ENCODE measurements at regions of chr1 and their contacts with region 1.

Region 1: DNA sequence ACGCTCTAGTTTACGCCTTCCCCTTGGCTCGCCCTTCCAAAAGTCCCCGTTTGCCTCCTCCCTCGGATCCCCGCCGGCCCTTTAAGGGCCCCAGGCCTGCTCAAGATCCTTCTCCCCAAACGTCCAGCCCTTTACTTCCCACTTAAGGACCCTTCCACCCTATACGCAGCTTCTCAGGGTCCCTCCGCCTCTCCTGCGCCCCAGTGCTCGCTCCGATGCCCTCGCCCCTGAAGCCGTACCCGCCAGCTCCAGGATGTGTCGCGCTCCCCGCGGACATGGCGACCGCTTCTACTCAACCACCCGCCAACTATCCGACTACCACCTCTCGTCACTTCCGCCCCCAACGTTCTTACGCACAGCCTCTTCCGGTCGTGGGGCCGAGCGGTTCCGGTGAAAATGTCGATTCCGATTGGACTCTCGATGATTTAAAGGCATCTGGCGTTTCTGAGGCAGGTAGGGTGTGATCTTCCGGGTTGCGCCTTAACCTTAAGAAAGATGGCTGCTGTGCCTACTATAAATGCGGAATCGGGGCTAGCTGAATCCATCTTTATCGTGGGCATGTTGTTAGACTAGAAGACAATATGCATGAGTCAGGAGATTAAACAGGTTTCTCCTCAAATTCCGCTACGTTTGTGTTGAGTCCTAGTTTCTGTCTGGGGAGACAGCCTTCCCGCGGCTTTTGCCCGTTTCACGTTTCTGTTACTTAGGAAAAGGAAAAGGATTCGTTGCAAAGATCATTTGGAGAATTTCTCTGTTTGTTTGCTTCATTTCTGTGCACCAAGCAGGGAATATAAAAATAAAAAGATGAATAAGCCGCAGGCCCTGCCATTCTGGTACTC is at the start of gene KHDC4:
- DNase-seq: peak; percentile 97
- total RNA-seq, gene KHDC4: 26.8 TPM

Region 2: GRCh38 chr1:155859881-155860871 is 74.1 kb before region 1 on chr1:
- intact Hi-C with region 1: loop called (anchors 2 kb)
- DNase-seq: peak; percentile 95

Region 3: DNA sequence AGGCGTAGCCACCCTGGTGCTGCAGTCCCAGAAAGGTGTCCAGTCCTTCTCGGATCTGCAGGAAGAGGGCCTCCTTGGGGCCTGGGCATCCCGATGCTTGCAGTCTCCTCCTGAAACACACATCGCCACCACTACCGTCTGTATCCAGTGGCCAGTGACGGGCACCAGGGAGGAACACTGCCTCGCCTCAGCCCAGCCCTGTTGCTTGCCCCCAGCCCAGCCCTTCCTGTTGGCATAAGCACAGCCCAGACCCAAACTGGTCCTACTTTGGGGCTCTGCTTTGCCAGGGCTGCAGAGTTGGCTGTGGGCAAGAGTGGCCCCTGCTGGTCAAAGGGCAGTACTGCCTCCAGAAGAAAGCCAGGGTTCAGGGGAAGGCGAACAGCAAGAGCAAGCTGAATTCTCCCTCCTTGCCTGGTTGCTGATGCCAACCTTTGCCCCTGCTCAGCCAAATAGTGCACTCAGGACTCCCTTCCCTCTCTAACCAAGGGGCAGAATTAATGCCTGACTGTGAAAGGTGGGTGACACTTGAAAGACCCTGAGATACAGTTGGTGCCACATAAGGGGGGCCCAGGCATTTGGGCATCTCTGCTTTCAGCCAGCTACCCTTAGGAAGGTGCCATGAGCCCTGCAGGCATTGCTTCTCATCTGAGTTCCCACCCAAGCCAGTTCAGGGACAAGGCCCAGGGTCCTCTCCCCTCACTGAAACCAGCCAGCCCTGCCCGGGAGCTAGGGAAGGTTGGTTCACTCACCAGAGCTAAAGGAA is 55.1 kb after region 1 on chr1:
- intact Hi-C with region 1: loop called (anchors 1 kb)
- DNase-seq: peak; percentile 89

Region 4: DNA sequence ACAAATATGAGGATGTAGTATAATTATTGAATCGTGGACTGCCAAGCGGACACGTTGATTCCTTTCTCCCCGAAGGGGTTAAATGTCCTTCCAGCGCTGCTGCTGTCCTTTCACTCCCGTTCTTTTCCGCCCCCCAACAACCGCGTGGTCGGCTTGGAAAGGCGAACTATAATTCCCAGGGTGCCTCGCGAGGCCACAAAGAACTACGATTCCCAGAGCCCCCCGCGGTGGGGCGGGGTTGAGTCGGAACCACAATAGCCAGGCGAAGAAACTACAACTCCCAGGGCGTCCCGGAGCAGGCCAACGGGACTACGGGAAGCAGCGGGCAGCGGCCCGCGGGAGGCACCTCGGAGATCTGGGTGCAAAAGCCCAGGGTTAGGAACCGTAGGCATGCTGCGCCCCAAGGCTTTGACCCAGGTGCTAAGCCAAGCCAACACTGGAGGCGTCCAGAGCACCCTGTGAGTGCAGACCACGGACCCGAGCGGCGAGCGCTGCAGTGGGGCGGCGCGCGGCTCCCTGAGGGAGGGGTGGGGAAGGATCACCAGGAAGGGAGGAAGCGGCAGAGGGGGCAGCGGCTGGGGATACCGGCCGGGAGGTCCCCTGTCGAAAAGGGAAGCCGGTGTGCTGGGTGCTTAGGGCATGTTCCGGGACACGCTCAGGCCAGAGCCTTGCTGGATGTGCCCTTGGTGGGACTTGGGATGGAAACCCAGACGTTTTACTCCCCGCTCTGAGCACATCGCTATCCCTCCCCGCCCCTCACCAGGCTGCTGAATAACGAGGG is 120.4 kb after region 1 on chr1 and contains the start of gene LAMTOR2:
- intact Hi-C with region 1: loop called (anchors 10 kb)
- DNase-seq: peak; percentile 99
- total RNA-seq, gene LAMTOR2: 49.8 TPM

Measured in cardiac septum (tissue), 1 donor.